AG04449 (cell line): ENCODE measurements at regions of chr9 and their contacts with region 1.

Region 1: GRCh38 chr9:34651876-34652601 is at the start of gene IL11RA:
- DNase-seq: peak; percentile 40
- H3K4me3 ChIP-seq: peak within 1 kb of the TSS; percentile 70
- CTCF ChIP-seq: no peak

Region 2: DNA sequence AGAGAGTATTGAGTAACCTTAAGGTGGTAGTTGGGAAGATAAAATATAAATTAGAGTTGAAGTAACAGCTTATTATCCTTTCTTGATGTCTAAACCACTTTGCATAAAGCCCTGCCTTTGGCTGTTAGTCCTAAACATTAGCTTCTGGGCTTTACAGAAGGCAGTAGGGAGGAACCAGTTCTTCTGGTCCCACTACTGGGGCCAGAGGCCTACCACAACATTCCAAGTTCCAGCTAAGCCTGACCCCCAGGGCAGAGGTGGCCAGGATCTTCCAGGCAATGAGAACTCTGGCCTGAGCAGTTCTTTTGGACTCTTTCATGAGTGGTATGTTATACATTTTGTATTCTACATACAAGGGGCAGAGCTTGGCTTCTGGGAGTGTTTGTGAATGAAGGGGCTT is 167.4 kb before region 1 on chr9:
- CTCF ChIA-PET with region 1: no interaction called
- POLR2A ChIA-PET with region 1: no interaction called
- DNase-seq: no peak
- H3K4me3 ChIP-seq: no peak overlapping the region
- CTCF ChIP-seq: no peak

Region 3: DNA sequence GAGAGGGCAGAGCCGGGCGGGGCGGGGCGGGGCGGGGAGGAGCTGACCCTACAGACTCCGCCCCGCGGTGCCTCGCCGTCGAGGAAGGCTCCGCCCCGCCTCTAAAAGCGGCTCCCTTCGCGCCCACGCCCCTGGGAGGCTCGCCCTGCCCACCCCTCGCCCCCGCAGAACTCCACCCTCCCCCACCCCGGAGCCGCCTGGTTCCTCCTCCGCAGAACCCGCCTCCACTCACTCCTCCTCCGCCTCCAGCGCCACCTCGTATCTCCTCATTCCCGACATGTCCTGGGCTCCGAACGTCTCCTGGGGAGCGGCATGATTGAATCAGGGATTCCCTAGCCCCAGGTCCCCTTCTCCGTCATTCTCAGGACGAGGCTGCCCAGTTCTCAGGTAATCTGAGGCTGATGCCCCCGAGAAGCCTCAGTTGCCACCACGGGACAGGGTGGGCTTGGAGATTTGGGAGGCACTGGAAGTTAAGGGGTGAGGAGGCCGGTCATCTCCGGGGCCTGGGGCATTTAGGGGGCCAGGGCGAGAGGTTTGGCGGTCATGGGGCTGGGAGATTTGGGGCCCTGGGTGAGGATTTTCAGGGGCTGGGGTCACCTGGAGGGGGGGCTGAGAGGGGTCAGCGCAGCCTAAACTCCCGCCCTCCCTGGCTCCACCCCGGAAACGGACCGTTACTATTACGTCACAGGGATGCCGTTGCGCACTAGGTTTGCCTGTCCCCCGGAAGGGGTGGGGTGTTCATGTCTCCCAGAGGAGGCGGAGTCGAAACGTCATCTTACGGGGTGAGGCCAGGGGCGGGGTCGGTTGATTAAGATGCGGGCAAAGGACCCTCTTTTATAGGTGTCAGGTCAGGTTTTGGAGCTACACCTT is 13.6 kb after region 1 on chr9:
- CTCF ChIA-PET with region 1: interaction called, 153 read pairs
- POLR2A ChIA-PET with region 1: interaction called, 11 read pairs
- DNase-seq: peak; percentile 65
- H3K4me3 ChIP-seq: peak overlapping the region; percentile 92
- CTCF ChIP-seq: no peak